Heart right ventricle (tissue), 16 donors: ENCODE measurements at regions of chr13 and their contacts with region 1.

Region 1: DNA sequence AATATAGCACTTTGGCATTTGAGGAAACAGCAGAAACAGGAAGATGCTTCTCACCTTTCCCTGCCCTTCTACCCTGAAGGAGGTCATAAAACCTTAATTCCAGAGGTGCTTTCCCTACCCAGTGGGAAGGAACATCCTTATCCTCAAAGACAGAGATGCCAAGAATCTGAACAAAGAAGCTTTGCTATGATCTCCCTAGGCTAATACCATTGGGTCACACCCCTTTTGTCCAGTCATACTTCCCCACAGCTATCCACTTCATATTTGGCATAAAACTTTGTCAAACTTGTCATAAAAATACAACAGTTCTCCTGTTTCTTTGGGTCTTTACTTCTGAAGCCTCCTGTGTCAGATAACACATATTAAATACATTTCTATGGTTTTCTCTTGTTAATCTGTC is 21.7 kb upstream of the RXFP2 start:
- DNase-seq: no peak
- ATAC-seq: no peak
- H3K4me3 ChIP-seq: no peak overlapping the region
- H3K27ac ChIP-seq: no peak overlapping the region
- H3K4me1 ChIP-seq: no peaks in the 10 kb centered on the region
- H3K27me3 ChIP-seq: peaks cover 0 to 33% (median 0%) of the 10 kb centered on the region in 7 donors
- CTCF ChIP-seq: no peak

Region 2: GRCh38 chr13:30002577-30002976 is 1715.0 kb before region 1 on chr13:
- intact Hi-C with region 1: no loop called
- DNase-seq: no peak
- ATAC-seq: no peak
- H3K4me3 ChIP-seq: no peak overlapping the region
- H3K27ac ChIP-seq: no peak overlapping the region
- H3K4me1 ChIP-seq: no peaks in the 10 kb centered on the region
- H3K27me3 ChIP-seq: peaks cover 0 to 5% (median 0%) of the 10 kb centered on the region in 7 donors
- CTCF ChIP-seq: no peak

Region 3: DNA sequence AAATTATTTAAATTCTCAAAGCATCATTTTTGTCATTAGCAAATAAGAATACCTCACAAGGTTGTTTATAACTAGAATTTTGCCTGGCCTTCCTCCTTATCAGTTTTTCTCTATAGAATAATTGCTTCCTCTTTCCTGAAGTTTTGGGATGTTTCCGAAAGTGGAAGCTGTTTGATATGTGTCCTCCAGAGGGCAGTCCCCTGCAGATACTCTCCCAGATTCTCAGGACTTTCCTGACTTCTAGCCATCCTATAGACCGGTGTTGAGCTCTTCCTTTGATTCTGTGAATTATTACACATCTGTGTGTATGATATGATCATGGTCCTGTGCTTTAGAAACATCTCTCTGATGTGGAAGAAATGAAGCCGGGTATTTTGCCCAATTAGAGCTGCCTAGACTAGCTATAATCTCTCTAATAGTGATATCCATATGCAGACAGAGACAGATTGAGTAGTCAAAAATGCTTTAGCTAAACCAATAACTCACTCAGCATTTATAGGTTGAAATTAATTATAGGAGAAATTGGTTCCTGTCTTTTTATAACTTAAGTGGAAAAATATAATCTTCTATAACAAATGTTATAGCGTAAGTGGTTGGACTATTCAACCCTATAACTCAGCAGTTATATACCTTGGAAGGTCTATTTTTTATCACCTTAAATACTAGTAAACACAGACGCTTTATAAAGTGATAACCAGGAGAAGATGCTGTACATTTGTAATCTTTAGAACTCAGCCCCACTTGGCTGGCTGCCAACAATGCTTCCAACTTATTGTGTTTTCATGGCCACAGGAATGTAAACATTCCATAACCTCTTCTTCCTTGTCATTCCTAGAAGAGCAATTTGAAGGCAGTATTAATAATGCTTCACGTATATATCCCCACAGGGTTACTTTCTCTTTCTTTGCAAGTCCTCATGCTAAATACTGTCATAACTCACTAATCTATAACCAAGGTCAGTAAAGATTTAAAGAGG is 179.2 kb before region 1 on chr13:
- intact Hi-C with region 1: loop called in 1 of 10 experiments (anchors 10 kb)
- DNase-seq: no peak
- ATAC-seq: peak in 2 of 8 donors; percentile 50 to 58
- H3K4me3 ChIP-seq: no peak overlapping the region
- H3K27ac ChIP-seq: no peak overlapping the region
- H3K4me1 ChIP-seq: no peaks in the 10 kb centered on the region
- H3K27me3 ChIP-seq: peaks cover 0 to 6% (median 0%) of the 10 kb centered on the region in 7 donors
- CTCF ChIP-seq: peak in 8 of 9 donors; percentile 15 to 67 (median 60)